ENCODE measurements at regions of chr10 and their contacts with region 1.

Region 1: GRCh38 chr10:132446661-132447194 is 49.7 kb downstream of the PWWP2B start:
- DNase-seq: peak; percentile 93
- H3K4me3 Mint-ChIP-seq: peak overlapping the region; percentile 89
- H3K27ac Mint-ChIP-seq: peak overlapping the region; percentile 98
- H3K4me1 Mint-ChIP-seq: peaks cover 33% of the 10 kb centered on the region
- H3K27me3 Mint-ChIP-seq: no peaks in the 10 kb centered on the region

Region 2: DNA sequence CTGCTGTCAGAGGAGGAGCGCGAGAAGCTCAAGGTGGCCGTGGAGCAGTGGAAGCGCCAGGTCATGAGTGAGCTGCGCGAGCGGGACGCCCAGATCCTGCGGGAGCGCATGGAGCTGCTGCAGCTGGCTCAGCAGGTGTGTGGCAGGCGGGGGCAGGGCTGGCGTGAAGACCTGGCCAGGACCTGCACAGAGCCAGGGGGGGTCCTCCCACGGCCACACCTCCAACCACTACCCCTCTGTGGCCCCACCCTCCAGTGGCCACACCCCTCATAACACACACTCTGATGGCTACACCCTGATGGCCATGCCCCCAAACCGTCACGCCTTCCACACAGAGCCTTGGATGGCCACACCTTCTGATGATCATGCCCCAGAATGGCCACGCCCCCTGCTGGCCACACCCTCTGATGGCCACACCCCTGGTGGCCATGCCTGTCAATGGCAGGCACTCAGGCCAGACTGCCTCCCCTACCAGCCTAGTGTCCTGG is 283.4 kb before region 1 on chr10:
- CTCF ChIA-PET with region 1: no interaction called
- intact Hi-C with region 1: loop called (anchors 1 kb)
- DNase-seq: peak; percentile 77
- H3K4me3 Mint-ChIP-seq: no peak overlapping the region
- H3K27ac Mint-ChIP-seq: peak overlapping the region; percentile 44
- H3K4me1 Mint-ChIP-seq: peaks cover 30% of the 10 kb centered on the region
- H3K27me3 Mint-ChIP-seq: no peaks in the 10 kb centered on the region

Region 3: GRCh38 chr10:132387764-132388210 is 58.9 kb before region 1 on chr10:
- CTCF ChIA-PET with region 1: interaction called, 9 read pairs
- intact Hi-C with region 1: loop called (anchors 1 kb)
- DNase-seq: peak; percentile 79
- H3K4me3 Mint-ChIP-seq: no peak overlapping the region
- H3K27ac Mint-ChIP-seq: peak overlapping the region; percentile 58
- H3K4me1 Mint-ChIP-seq: peaks cover 2% of the 10 kb centered on the region
- H3K27me3 Mint-ChIP-seq: no peaks in the 10 kb centered on the region

Region 4: DNA sequence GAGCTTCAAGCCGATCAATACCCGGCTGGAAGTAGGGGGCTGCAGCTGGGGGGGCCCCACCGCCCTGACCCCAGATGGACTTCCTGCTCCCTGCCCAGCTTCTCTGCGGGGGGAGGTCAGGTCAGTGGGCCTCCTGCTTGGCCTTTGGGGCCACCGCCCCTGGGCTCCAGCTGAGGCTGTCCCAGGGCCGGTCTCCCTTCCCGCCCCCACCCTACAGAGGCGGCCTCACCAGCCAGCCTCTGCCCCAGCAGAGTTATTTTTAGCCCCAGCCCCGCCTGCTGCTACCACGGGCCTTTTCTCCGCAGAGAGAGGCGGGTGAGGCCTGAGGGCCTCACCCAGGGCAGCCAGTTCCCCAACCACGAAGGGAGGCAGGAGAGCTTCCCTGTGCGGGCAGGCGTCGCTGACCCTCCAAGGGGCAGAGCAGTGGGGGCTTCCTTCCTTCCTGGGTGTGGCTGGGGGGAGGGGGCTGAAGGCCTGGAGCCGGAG is 25.3 kb before region 1 on chr10:
- CTCF ChIA-PET with region 1: interaction called, 10 read pairs
- intact Hi-C with region 1: loop called (anchors 2 kb)
- DNase-seq: peak; percentile 52
- H3K4me3 Mint-ChIP-seq: no peak overlapping the region
- H3K27ac Mint-ChIP-seq: peak overlapping the region; percentile 24
- H3K4me1 Mint-ChIP-seq: peaks cover 22% of the 10 kb centered on the region
- H3K27me3 Mint-ChIP-seq: no peaks in the 10 kb centered on the region